Tibial artery (tissue), 4 donors: ENCODE measurements at regions of chr7 and their contacts with region 1.

Region 1: DNA sequence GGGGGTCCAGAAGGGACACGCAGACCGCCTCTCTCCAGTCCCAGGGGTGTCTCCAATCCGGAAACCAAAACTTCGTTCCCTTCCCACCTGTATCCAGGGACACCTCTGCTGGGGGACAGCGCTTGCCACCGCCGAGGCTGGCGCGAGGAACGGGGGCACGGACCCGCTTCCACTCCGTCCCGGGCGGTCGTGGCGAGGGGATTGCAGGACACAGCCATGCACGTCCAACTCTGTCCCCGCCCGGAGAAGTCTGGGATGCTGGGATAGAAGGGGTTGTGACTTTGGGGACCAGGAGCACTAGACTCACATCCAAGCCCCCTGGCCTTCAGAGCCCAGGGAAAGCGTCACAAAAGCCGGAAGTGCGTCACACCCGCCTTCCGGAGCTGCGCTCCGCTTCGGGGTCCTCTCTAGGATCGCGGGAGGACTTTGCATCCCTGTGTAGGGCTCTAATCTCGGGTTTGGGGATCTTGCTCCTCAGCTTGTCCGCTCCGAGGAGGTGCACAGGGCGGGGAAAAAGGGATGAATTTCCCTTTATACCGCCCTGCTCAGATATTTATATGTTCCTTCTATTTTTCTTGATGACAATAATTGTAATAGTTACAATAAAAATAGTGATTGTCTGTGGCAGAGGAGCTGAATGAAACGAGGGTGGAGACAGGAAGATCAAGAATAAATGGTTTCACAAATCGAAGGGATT is at the start of gene FAM200A:
- DNase-seq: peak; percentile 78 to 92
- H3K4me3 ChIP-seq: peak within 1 kb of the TSS; percentile 83 to 86
- H3K27ac ChIP-seq: peak within 1 kb of the TSS; percentile 81 to 86
- H3K4me1 ChIP-seq: peaks cover 0 to 24% (median 20%) of the 10 kb centered on the region in 4 donors
- H3K27me3 ChIP-seq: no peaks in the 10 kb centered on the region
- CTCF ChIP-seq: no peak

Region 2: DNA sequence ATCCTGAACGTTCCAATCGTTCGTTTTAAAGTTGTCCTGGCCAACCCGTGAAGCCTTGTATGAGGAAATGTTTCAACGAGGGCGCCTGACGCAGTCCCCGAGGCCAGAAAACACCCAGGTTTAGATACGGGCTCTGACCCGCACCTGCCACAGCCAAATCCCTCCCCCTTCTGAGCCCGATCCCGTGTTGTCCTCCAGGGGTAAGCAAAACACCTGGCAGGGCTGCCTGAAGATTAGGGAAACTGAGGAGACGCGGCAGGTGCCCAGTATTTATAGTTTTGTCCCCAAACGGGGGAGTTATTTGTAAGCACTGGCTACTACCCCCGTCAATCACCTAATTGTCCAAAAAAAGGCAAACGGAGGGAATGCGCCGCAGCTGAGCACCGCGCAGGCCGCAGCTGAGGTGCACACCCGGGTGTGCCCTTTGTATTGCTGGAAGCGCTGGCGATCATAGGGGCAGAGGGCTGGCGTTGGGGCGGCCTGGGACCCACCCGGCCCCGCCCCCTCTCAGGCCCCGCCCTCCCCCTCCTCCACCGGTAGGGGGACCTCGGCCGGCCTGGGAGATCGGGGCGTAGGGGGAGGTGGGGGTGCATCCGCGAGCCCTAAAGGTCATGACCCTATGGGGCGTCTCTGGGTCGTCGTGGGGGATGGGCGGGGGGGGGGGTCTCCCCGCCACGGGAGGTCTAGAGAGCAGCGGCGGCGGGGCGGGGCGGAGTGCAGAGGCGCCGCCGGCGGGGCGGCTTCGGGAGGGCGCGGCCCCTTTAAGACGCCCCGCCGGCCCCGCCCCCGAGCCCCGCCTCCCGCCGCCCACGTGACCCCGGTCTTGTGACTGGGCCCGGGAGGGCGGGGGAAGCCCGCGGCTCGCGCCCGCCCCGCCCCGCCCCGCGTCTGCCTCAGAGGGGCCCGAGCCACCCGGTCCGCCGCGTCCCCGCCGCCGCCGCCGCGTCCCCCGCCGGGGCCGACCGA is 1270.8 kb before region 1 on chr7 and contains the start of gene BRI3:
- intact Hi-C with region 1: loop called (anchors 5 kb)
- DNase-seq: peak; percentile 86 to 94
- H3K4me3 ChIP-seq: peak within 1 kb of the TSS; percentile 75 to 86
- H3K27ac ChIP-seq: peak within 1 kb of the TSS; percentile 93 to 98
- H3K4me1 ChIP-seq: peaks cover 8 to 55% (median 36%) of the 10 kb centered on the region in 4 donors
- H3K27me3 ChIP-seq: no peaks in the 10 kb centered on the region
- CTCF ChIP-seq: no peak

Region 3: GRCh38 chr7:98687078-98687800 is 864.7 kb before region 1 on chr7:
- intact Hi-C with region 1: no loop called
- DNase-seq: no peak
- H3K4me3 ChIP-seq: no peak overlapping the region
- H3K27ac ChIP-seq: no peak overlapping the region
- H3K4me1 ChIP-seq: no peaks in the 10 kb centered on the region
- H3K27me3 ChIP-seq: no peaks in the 10 kb centered on the region
- CTCF ChIP-seq: no peak